SK-N-SH (cell line): ENCODE measurements at regions of chr10 and their contacts with region 1.

Region 1: DNA sequence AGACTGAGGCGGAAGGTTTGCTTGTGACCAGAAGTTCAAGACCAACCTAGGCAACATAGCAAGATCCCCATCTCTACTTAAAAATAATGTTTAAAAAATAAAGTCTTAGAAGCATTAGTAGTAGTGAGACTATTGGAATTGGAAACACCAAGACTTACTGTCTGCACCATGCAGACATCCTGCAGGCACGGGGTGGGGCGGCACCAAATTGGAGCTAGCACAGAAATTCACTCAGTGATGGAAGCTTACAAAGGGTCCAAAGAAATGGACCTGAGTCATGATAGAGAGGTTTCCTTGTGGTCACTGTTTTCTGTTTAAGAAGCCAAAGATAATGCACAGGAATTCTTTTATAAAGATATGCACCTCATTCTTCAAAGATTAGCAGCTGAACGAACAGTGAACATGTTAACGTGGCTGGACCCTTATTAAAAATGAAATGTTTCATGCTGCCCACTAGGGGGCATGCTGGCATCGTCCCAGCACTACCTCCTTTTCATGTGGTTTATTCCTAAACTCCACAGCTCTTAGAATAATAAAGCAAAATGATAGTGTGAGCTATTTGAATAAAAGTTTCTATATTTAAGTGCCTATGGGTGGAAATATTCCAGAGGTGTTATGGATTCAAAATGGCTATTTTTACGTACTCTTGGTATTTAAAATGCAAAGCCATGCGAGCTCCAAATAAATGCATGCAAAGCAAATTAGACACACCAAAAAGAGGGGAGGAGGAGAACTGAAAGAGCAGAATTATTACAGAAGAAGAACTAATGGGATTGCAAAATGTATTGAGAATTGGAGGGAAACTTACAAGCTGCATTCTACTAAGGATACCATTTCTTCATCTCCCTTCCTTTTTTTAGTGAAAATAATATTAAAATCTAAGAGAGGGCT is 28.6 kb downstream of the PDSS1 start:
- DNase-seq: peak; percentile 63
- H3K4me3 ChIP-seq: no peak overlapping the region; a peak in 1 of 4 replicates
- H3K27ac ChIP-seq: no peak overlapping the region
- H3K4me1 ChIP-seq: no peaks in the 10 kb centered on the region
- H3K27me3 ChIP-seq: no peaks in the 10 kb centered on the region
- CTCF ChIP-seq: peak; percentile 89
- EP300 ChIP-seq: no peak
- RAD21 ChIP-seq: peak; percentile 82

Region 2: DNA sequence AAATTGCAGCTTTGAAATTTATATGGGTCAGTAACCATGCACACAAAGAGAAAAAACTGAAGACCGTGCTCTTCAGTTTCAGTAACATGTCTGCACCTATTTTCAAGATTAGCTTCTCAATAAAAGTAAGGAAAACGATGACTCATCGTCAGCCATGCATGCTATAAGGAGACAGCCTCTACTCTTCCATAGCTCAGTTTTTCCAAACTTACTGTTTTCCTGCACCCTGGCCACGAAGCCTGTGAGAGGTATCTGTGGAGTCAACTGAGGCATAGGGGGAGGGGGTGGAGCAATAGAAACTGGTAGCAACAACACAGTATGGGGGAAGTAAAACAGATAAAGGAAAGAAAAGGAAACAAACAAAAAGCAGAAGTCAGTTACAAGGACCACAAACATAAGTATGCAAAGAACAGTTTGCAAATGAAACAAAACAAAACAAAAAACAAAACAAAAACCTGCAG is 29.4 kb after region 1 on chr10:
- CTCF ChIA-PET with region 1: interaction called, 16 read pairs
- POLR2A ChIA-PET with region 1: no interaction called
- DNase-seq: no peak
- H3K4me3 ChIP-seq: no peak overlapping the region
- H3K27ac ChIP-seq: no peak overlapping the region
- H3K4me1 ChIP-seq: no peaks in the 10 kb centered on the region; a peak in 2 of 4 replicates
- H3K27me3 ChIP-seq: no peaks in the 10 kb centered on the region
- CTCF ChIP-seq: no peak
- EP300 ChIP-seq: no peak
- RAD21 ChIP-seq: no peak

Region 3: DNA sequence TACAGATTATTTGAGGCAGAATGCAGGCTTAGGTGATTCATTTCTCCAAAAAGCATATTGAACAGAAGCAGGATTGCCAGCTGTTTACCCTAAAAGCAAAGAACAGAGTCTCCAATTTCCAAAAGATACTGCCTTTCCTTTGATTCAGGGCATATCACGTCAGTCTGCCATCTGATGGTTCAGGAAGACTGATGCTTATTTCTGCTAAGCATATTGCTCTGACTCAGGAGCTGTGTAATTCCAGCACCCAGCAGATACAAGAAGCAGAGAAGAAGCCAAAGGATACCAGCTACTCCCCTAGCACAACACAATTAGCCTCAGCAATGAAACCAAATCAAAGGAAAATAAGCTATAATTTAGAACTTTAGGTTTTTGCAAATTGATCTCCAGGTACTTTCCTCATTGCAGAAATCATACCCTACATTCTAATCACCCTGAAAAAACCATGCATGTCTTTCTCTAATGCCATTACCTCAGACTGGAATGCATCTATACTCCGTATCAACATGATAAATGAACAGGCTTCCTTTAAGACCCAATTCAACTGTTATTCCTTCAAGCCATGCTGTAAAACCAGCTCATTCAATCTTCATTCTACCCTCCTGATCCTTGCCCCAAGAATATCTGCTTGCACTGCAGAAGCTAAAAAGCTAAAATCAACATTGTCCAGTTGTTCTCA is 79.6 kb after region 1 on chr10:
- CTCF ChIA-PET with region 1: interaction called, 10 read pairs
- POLR2A ChIA-PET with region 1: no interaction called
- DNase-seq: no peak
- H3K4me3 ChIP-seq: no peak overlapping the region
- H3K27ac ChIP-seq: peak overlapping the region in 1 of 2 experiments; percentile 20; a peak in 1 of 4 replicates
- H3K4me1 ChIP-seq: 0 out of 4 replicates have a peak, but pooled peaks cover 0 to 6% of the 10 kb centered on the region in 2 experiments
- H3K27me3 ChIP-seq: no peaks in the 10 kb centered on the region
- CTCF ChIP-seq: no peak
- EP300 ChIP-seq: no peak
- RAD21 ChIP-seq: no peak

Region 4: GRCh38 chr10:26881600-26882331 is 155.7 kb after region 1 on chr10:
- CTCF ChIA-PET with region 1: interaction called, 143 read pairs
- POLR2A ChIA-PET with region 1: no interaction called
- DNase-seq: peak; percentile 58
- H3K4me3 ChIP-seq: peak overlapping the region; percentile 12 to 53; a peak in 3 of 4 replicates
- H3K27ac ChIP-seq: no peak overlapping the region
- H3K4me1 ChIP-seq: peaks cover 0 to 2% of the 10 kb centered on the region in 2 experiments; a peak in 1 of 4 replicates
- H3K27me3 ChIP-seq: peaks cover 11% of the 10 kb centered on the region
- CTCF ChIP-seq: peak; percentile 84
- EP300 ChIP-seq: no peak
- RAD21 ChIP-seq: peak; percentile 91